Lower leg skin (tissue), 4 donors: ENCODE measurements at regions of chr6 and their contacts with region 1.

Region 1: GRCh38 chr6:83514866-83515466 is 2.6 kb downstream of the PRSS35 start:
- DNase-seq: peak in 1 of 2 donors; percentile 19
- H3K4me3 ChIP-seq: no peak overlapping the region
- CTCF ChIP-seq: no peak
- POLR2A ChIP-seq: no peak

Region 2: GRCh38 chr6:83417880-83418663 is 96.9 kb before region 1 on chr6:
- intact Hi-C with region 1: loop called (anchors 10 kb)
- DNase-seq: no peak
- H3K4me3 ChIP-seq: no peak overlapping the region
- CTCF ChIP-seq: no peak
- POLR2A ChIP-seq: no peak